CD4-positive, alpha-beta T cell (primary cell): ENCODE measurements at regions of chr17 and their contacts with region 1.

Region 1: DNA sequence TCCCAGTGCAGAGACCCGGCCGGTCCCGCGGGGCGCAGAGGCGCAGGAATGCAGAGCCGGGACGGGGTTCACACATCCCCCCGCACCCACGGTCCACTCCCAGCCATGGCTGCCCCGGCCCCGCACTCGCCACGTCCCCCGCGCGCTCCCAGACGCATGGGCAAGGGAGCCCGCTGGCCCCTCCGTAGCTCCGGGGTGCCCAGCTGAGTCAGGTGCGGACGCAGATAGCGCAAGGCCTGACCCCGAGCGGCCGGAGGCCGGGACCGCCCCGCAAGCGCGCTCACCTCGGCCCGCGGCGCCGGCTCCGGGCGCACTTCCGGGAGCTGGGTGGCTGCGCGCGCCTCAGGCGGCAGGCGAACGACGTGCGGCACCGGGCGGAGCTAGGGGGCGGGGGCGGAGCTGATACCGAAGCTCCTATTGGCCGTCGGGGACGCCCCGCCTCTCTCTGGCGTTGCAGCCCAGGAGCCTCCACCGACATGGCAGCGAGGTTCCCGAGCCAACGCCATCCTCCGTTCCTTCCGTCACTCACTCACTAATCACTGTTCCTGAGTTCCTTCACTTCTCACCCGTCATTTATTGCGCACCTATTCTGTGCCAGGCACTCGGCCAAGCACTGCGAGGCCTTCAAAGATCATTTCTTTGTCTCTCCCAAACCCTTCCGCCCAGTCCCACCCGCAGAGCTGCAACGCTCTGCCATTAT is at the start of gene ZNF18:
- DNase-seq: peak; percentile 89 to 98 (median 95)
- ATAC-seq: peak; percentile 98
- H3K4me3 ChIP-seq: peak within 1 kb of the TSS; percentile 90
- H3K4me3 Mint-ChIP-seq: peak within 1 kb of the TSS; percentile 98
- H3K27ac ChIP-seq: peak within 1 kb of the TSS; percentile 76 to 78
- H3K27ac Mint-ChIP-seq: peak within 1 kb of the TSS; percentile 88
- H3K4me1 ChIP-seq: peaks cover 12% of the 10 kb centered on the region
- H3K4me1 Mint-ChIP-seq: peaks cover 32% of the 10 kb centered on the region
- H3K27me3 ChIP-seq: no peaks in the 10 kb centered on the region
- H3K27me3 Mint-ChIP-seq: no peaks in the 10 kb centered on the region
- CTCF ChIP-seq: no peak
- total RNA-seq, gene ZNF18: 11.4 to 11.5 TPM

Region 2: GRCh38 chr17:11986942-11987329 is 10.4 kb before region 1 on chr17:
- CTCF ChIA-PET with region 1: interaction called, 3 read pairs
- POLR2A ChIA-PET with region 1: interaction called, 16 read pairs
- intact Hi-C with region 1: no loop called
- DNase-seq: no peak
- ATAC-seq: no peak
- H3K4me3 ChIP-seq: no peak overlapping the region
- H3K4me3 Mint-ChIP-seq: no peak overlapping the region
- H3K27ac ChIP-seq: no peak overlapping the region
- H3K27ac Mint-ChIP-seq: no peak overlapping the region
- H3K4me1 ChIP-seq: no peaks in the 10 kb centered on the region
- H3K4me1 Mint-ChIP-seq: peaks cover 27% of the 10 kb centered on the region
- H3K27me3 ChIP-seq: no peaks in the 10 kb centered on the region
- H3K27me3 Mint-ChIP-seq: no peaks in the 10 kb centered on the region
- CTCF ChIP-seq: peak; percentile 53

Region 3: DNA sequence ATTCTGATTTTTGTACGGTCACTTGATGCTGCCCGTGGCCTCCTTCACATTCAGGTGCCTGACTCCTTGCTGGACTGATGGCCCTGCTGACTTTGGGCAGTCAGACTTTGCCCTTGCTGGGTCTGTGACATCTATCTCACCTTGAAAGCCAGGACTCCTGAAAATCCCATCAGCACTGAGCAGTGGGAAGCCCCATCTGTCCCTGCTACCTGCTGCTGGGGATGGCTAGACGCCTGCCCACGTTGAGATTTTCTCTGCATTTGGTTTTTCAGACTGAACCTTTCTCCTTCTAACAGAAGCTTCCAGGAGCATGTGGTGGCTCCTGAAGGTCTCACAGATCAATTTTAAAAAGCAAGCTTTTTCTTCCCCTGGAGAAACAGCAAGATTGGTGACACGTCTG is 10.2 kb after region 1 on chr17:
- CTCF ChIA-PET with region 1: no interaction called
- POLR2A ChIA-PET with region 1: interaction called, 42 read pairs
- intact Hi-C with region 1: no loop called
- DNase-seq: no peak
- ATAC-seq: no peak
- H3K4me3 ChIP-seq: no peak overlapping the region
- H3K4me3 Mint-ChIP-seq: no peak overlapping the region
- H3K27ac ChIP-seq: no peak overlapping the region
- H3K27ac Mint-ChIP-seq: no peak overlapping the region
- H3K4me1 ChIP-seq: no peaks in the 10 kb centered on the region
- H3K4me1 Mint-ChIP-seq: no peaks in the 10 kb centered on the region
- H3K27me3 ChIP-seq: no peaks in the 10 kb centered on the region
- H3K27me3 Mint-ChIP-seq: peaks cover 13% of the 10 kb centered on the region
- CTCF ChIP-seq: no peak

Region 4: DNA sequence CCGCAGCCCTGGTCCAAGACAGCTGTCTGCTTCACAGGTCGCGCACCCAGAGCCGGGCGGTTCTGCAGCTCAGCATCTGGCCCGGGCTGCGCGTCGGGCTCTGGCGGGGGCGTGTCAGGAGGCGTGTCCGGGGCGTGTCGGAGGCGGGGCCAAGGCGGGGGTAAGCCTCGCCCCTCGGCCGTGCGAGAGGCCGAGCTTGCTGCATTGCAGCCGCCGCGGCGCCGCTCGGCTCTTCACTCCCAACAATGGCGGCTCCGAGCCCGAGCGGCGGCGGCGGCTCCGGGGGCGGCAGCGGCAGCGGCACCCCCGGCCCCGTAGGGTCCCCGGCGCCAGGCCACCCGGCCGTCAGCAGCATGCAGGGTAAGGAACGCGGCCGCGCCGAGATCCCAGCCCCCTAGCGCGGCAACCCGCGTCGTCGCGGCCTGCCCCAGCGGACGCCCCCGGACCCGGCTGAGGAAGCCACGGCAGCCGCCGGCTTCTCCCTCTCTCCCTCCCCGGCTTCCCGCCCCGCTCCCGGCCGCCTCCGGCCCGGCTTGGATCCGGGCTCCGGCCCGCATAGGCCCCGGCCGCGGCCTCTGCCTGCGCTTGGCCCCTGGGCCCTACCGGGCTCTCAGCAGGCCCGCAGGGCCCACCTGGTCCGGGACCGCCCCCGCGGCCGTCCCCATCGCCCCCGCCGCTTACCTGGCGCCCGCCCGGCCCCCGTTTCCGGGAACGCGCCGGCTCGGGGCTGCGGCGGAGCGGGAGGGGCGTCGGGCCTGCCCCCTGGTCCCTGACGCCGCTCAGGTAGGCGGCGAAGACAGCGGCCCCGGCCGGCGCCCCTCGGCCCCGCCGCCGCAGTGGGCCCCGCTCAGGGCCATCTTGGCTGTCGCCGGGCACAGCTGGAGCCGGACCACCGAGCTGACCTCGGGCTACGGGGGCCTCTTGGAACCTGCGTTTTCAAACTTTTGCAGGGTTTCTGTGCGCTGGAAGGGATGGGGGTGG is 23.6 kb after region 1 on chr17 and contains the start of gene MAP2K4:
- CTCF ChIA-PET with region 1: interaction called, 21 read pairs
- POLR2A ChIA-PET with region 1: interaction called, 389 read pairs
- intact Hi-C with region 1: loop called (anchors 1 kb)
- DNase-seq: peak; percentile 86 to 99 (median 95)
- ATAC-seq: peak; percentile 95
- H3K4me3 ChIP-seq: peak within 1 kb of the TSS; percentile 58
- H3K4me3 Mint-ChIP-seq: peak within 1 kb of the TSS; percentile 91
- H3K27ac ChIP-seq: peak within 1 kb of the TSS in 1 of 2 donors; percentile 26
- H3K27ac Mint-ChIP-seq: peak within 1 kb of the TSS; percentile 77
- H3K4me1 ChIP-seq: peaks cover 13% of the 10 kb centered on the region
- H3K4me1 Mint-ChIP-seq: peaks cover 55% of the 10 kb centered on the region
- H3K27me3 ChIP-seq: no peaks in the 10 kb centered on the region
- H3K27me3 Mint-ChIP-seq: peaks cover 6% of the 10 kb centered on the region
- CTCF ChIP-seq: no peak
- total RNA-seq, gene MAP2K4: 22.4 to 22.6 TPM

Region 5: GRCh38 chr17:12027658-12028057 is 30.4 kb after region 1 on chr17:
- CTCF ChIA-PET with region 1: interaction called, 21 read pairs
- POLR2A ChIA-PET with region 1: interaction called, 389 read pairs
- intact Hi-C with region 1: no loop called
- DNase-seq: no peak
- ATAC-seq: no peak
- H3K4me3 ChIP-seq: no peak overlapping the region
- H3K4me3 Mint-ChIP-seq: peak overlapping the region; percentile 17
- H3K27ac ChIP-seq: no peak overlapping the region
- H3K27ac Mint-ChIP-seq: no peak overlapping the region
- H3K4me1 ChIP-seq: peaks cover 6% of the 10 kb centered on the region
- H3K4me1 Mint-ChIP-seq: peaks cover 91% of the 10 kb centered on the region
- H3K27me3 ChIP-seq: no peaks in the 10 kb centered on the region
- H3K27me3 Mint-ChIP-seq: no peaks in the 10 kb centered on the region
- CTCF ChIP-seq: no peak

Region 6: GRCh38 chr17:13017659-13018459 is 1020.6 kb after region 1 on chr17 and contains the start of gene ELAC2:
- CTCF ChIA-PET with region 1: no interaction called
- POLR2A ChIA-PET with region 1: interaction called, 12 read pairs
- intact Hi-C with region 1: loop called in 1 of 2 experiments (anchors 5 kb)
- DNase-seq: peak; percentile 90 to 98 (median 92)
- ATAC-seq: peak; percentile 99
- H3K4me3 ChIP-seq: peak within 1 kb of the TSS; percentile 84
- H3K4me3 Mint-ChIP-seq: peak within 1 kb of the TSS; percentile 100
- H3K27ac ChIP-seq: peak within 1 kb of the TSS; percentile 61 to 76
- H3K27ac Mint-ChIP-seq: peak within 1 kb of the TSS; percentile 93
- H3K4me1 ChIP-seq: peaks cover 26% of the 10 kb centered on the region
- H3K4me1 Mint-ChIP-seq: peaks cover 44% of the 10 kb centered on the region
- H3K27me3 ChIP-seq: no peaks in the 10 kb centered on the region
- H3K27me3 Mint-ChIP-seq: no peaks in the 10 kb centered on the region
- CTCF ChIP-seq: peak; percentile 17
- total RNA-seq, gene ELAC2: 51.6 to 53.3 TPM